ENCODE measurements at regions of chr2 and their contacts with region 1.

Region 1: GRCh38 chr2:74573747-74574562 is 19.4 kb downstream of the DOK1 start:
- DNase-seq: no peak
- H3K4me3 ChIP-seq: no peak overlapping the region
- CTCF ChIP-seq: no peak

Region 2: GRCh38 chr2:74507145-74507925 is 66.6 kb before region 1 on chr2 and contains the start of gene PCGF1:
- CTCF ChIA-PET with region 1: interaction called, 14 read pairs
- POLR2A ChIA-PET with region 1: no interaction called
- DNase-seq: peak; percentile 87
- H3K4me3 ChIP-seq: peak within 1 kb of the TSS; percentile 100
- CTCF ChIP-seq: peak; percentile 70